Activated CD4-positive, alpha-beta T cell treated with anti-CD3 and anti-CD28 coated beads for 36 hours (primary cell): ENCODE measurements at regions of chr6 and their contacts with region 1.

Region 1: DNA sequence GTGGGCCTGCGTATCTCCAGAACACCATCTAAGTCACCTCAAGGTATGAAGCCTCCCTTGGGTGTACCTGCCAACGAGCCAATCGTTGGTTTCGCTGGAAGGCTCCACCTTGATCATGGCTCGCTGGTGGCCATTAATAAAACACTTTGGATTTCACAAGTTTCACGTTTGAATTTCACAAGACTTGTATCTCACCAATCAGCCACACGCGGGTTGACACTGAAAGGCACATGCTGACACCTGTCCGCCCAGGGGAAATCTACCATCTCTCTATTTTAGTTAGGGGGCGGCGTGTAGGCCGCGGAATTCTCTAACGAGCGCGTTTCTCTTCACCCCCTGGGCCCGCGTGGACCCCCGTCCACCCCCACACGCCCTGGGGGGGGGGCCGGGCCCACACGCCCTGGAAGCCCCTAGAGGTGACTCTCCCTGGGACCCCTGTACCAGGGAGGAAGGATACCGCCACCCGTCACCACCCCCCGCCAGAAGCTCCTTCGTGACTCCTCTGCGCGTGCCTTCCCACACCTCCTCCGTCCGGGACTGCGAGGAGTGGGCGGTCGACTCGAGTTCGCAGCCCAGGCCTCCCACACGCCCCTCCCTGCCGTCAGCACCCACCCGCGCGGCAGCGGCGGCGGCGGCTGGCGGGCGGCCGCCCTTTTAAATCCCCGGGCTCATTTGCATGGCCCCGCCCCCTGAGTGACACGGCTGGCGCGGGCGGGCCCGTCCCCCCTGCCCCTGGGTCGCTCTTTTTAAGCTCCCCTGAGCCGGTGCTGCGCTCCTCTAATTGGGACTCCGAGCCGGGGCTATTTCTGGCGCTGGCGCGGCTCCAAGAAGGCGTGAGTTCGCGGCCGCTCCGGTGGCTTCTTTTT is at the start of gene HMGA1:
- DNase-seq: peak; percentile 94
- ATAC-seq: peak; percentile 70
- H3K4me3 Mint-ChIP-seq: peak within 1 kb of the TSS; percentile 85
- H3K27ac Mint-ChIP-seq: peak within 1 kb of the TSS; percentile 91
- H3K4me1 Mint-ChIP-seq: peaks cover 41% of the 10 kb centered on the region
- H3K27me3 Mint-ChIP-seq: no peaks in the 10 kb centered on the region
- total RNA-seq, gene HMGA1: 569 to 649 TPM

Region 2: DNA sequence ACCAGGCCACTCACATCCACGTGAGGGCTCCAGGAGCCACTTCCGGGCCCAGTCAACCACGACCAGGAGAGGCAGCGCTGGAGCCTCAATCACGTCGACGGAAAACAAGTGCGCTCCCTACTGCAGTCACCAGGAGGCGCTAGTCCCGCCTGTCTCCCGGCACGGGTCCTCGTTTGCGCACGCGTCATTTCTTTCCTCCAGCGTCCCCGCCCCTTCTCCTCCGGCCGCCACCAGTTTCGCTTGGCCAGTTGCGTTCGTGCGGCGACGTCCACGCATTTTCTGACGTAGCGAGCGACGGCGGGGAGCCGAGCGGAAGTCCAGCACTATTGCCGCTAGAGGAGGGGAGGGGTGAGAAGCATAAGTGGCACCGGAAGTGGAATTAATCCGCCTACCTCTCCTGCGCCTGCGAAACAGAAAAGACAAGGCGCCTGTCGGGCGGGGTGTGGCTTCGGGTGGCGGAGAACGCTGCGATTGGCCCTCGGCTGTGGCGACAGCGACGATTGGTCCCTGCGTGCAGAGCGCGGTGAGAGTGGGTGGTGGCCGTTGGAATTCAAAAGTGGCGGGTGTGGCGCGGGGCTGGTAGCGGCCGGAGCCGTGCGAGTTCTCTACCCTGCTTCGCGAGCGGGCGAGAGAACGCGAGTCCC is 845.0 kb before region 1 on chr6 and contains the start of gene KIFC1:
- CTCF ChIA-PET with region 1: no interaction called
- POLR2A ChIA-PET with region 1: no interaction called
- intact Hi-C with region 1: loop called in 1 of 2 experiments (anchors 5 kb)
- DNase-seq: peak; percentile 100
- ATAC-seq: peak; percentile 90
- H3K4me3 Mint-ChIP-seq: peak within 1 kb of the TSS; percentile 88
- H3K27ac Mint-ChIP-seq: peak within 1 kb of the TSS; percentile 96
- H3K4me1 Mint-ChIP-seq: peaks cover 37% of the 10 kb centered on the region
- H3K27me3 Mint-ChIP-seq: no peaks in the 10 kb centered on the region
- total RNA-seq, gene KIFC1: 86.0 to 89.3 TPM

Region 3: GRCh38 chr6:33711140-33712129 is 524.9 kb before region 1 on chr6 and contains the start of gene UQCC2:
- CTCF ChIA-PET with region 1: no interaction called
- POLR2A ChIA-PET with region 1: interaction called, 3 read pairs
- intact Hi-C with region 1: loop called in 1 of 2 experiments (anchors 5 kb)
- DNase-seq: peak; percentile 99
- ATAC-seq: peak; percentile 99
- H3K4me3 Mint-ChIP-seq: peak within 1 kb of the TSS; percentile 90
- H3K27ac Mint-ChIP-seq: peak within 1 kb of the TSS; percentile 96
- H3K4me1 Mint-ChIP-seq: peaks cover 34% of the 10 kb centered on the region
- H3K27me3 Mint-ChIP-seq: no peaks in the 10 kb centered on the region
- total RNA-seq, gene UQCC2: 141 to 147 TPM

Region 4: DNA sequence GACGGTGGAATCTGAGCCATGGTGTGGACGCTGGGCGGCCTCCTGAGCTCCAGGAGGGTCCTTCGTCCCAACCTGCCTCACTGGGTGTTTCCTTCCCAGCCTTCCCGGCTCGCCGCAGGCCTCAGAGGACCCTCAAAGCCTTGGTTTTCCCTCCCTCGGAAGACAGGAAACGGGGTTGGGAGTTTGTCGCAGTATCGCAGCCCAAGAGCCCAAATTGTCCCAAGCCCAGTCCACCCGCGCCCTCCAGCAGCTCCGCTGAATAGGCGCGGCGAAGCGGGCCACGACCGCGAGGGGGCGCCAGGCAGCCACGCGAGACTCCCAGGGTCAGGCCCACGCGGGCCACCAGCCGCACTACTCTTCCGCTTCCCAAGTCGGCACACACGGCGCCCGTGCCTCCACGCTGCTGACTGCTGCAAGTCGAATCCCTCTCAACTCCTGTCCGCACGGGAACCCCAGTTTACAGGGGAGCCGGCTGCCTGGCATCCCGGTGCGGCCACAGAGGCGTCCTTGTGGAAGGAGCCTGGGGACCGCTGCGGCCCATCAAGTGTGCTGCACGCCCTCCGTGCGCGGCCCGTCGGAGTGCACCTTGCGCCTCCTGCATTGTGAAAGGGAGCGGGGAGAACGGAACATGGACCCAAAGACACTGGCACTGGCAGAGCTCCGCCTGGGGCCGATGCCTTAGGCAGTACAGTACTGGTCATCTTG is 40.1 kb before region 1 on chr6:
- CTCF ChIA-PET with region 1: interaction called, 5 read pairs
- POLR2A ChIA-PET with region 1: interaction called, 3 read pairs
- intact Hi-C with region 1: loop called in 1 of 2 experiments (anchors 1 kb)
- DNase-seq: peak; percentile 93
- ATAC-seq: peak; percentile 94
- H3K4me3 Mint-ChIP-seq: peak overlapping the region; percentile 73
- H3K27ac Mint-ChIP-seq: peak overlapping the region; percentile 80
- H3K4me1 Mint-ChIP-seq: peaks cover 11% of the 10 kb centered on the region
- H3K27me3 Mint-ChIP-seq: no peaks in the 10 kb centered on the region

Region 5: GRCh38 chr6:34301408-34301807 is 65.0 kb after region 1 on chr6:
- CTCF ChIA-PET with region 1: no interaction called
- POLR2A ChIA-PET with region 1: no interaction called
- intact Hi-C with region 1: no loop called
- DNase-seq: no peak
- ATAC-seq: no peak
- H3K4me3 Mint-ChIP-seq: no peak overlapping the region
- H3K27ac Mint-ChIP-seq: no peak overlapping the region
- H3K4me1 Mint-ChIP-seq: peaks cover 2% of the 10 kb centered on the region
- H3K27me3 Mint-ChIP-seq: no peaks in the 10 kb centered on the region

Region 6: GRCh38 chr6:34425498-34426410 is 189.4 kb after region 1 on chr6 and contains the start of gene RPS10:
- CTCF ChIA-PET with region 1: no interaction called
- POLR2A ChIA-PET with region 1: no interaction called
- intact Hi-C with region 1: loop called in 1 of 2 experiments (anchors 1 kb)
- DNase-seq: peak; percentile 95
- ATAC-seq: peak; percentile 95
- H3K4me3 Mint-ChIP-seq: peak within 1 kb of the TSS; percentile 97
- H3K27ac Mint-ChIP-seq: peak within 1 kb of the TSS; percentile 99
- H3K4me1 Mint-ChIP-seq: peaks cover 35% of the 10 kb centered on the region
- H3K27me3 Mint-ChIP-seq: no peaks in the 10 kb centered on the region
- total RNA-seq, gene RPS10: 2,447 to 2,541 TPM

Region 7: GRCh38 chr6:34887753-34888513 is 651.6 kb after region 1 on chr6 and contains the start of gene TAF11:
- CTCF ChIA-PET with region 1: no interaction called
- POLR2A ChIA-PET with region 1: no interaction called
- intact Hi-C with region 1: loop called in 1 of 2 experiments (anchors 2 kb)
- DNase-seq: peak; percentile 96
- ATAC-seq: peak; percentile 89
- H3K4me3 Mint-ChIP-seq: peak within 1 kb of the TSS; percentile 100
- H3K27ac Mint-ChIP-seq: peak within 1 kb of the TSS; percentile 100
- H3K4me1 Mint-ChIP-seq: peaks cover 41% of the 10 kb centered on the region
- H3K27me3 Mint-ChIP-seq: no peaks in the 10 kb centered on the region
- total RNA-seq, gene TAF11: 28.7 to 32.3 TPM